Panc1 (cell line): ENCODE measurements at regions of chr3 and their contacts with region 1.

Region 1: GRCh38 chr3:185677146-185677829 is 91.2 kb downstream of the SENP2 start:
- DNase-seq: peak; percentile 69
- ATAC-seq: peak; percentile 94
- H3K4me3 ChIP-seq: no peak overlapping the region
- H3K27ac ChIP-seq: no peak overlapping the region
- H3K4me1 ChIP-seq: no peaks in the 10 kb centered on the region
- H3K27me3 ChIP-seq: no peaks in the 10 kb centered on the region
- CTCF ChIP-seq: peak; percentile 85

Region 2: DNA sequence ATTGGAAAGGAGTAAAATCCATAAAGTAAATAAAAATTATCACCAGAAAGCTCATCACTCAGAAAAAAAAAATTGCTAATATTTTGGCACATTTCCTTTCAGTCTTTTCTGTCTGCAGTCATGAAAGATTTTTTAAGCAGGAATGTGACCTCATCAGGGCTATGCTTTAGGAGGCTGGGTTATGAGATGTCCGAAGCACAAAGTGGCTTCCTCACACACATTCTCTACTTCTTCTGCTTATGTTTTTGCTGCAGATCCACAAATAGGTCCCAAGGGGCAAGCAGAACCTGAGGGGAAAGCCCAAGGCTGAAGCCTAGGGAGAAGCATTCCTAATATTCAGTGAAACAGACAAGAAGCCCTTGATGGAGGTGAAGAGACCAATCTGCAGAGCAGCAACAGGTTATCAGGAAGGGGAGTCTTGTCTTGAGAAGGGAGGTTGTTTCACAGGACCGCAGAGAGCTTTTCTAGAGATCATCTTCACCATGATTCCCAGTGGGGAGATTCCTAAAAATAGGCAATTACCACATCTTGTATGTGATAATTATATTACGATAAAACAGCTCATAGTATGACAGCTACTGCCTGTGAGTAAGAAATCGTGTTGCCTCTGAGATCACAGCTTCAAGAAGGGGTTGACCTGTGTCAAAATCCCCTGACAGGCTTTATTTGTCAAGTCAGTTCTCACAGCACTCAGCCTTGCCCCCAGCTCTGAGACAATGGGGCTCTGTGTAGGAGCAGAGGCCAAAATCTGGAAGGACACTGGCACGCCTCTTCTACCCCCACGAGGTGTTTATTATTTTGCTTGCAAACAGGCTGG is 87.1 kb after region 1 on chr3:
- CTCF ChIA-PET with region 1: interaction called, 10 read pairs
- POLR2A ChIA-PET with region 1: no interaction called
- in situ Hi-C with region 1: no loop called
- intact Hi-C with region 1: no loop called
- DNase-seq: no peak
- ATAC-seq: 0 out of 2 replicates have a peak, but pooled peaks have one; percentile 52
- H3K4me3 ChIP-seq: no peak overlapping the region
- H3K27ac ChIP-seq: peak overlapping the region; percentile 20; the same call in 1 of the 2 replicates
- H3K4me1 ChIP-seq: peaks cover 50% of the 10 kb centered on the region
- H3K27me3 ChIP-seq: no peaks in the 10 kb centered on the region
- CTCF ChIP-seq: no peak